HepG2 (cell line): ENCODE measurements at regions of chr6 and their contacts with region 1.

Region 1: GRCh38 chr6:137892271-137892708 is 25.2 kb downstream of the TNFAIP3 start:
- DNase-seq: no peak
- ATAC-seq: no peak
- H3K4me3 ChIP-seq: no peak overlapping the region
- H3K27ac ChIP-seq: no peak overlapping the region
- H3K4me1 ChIP-seq: peaks cover 17% of the 10 kb centered on the region
- H3K27me3 ChIP-seq: no peaks in the 10 kb centered on the region; a peak in 1 of 5 replicates
- CTCF ChIP-seq: no peak
- EP300 ChIP-seq: no peak
- POLR2A ChIP-seq: no peak
- RAD21 ChIP-seq: no peak

Region 2: DNA sequence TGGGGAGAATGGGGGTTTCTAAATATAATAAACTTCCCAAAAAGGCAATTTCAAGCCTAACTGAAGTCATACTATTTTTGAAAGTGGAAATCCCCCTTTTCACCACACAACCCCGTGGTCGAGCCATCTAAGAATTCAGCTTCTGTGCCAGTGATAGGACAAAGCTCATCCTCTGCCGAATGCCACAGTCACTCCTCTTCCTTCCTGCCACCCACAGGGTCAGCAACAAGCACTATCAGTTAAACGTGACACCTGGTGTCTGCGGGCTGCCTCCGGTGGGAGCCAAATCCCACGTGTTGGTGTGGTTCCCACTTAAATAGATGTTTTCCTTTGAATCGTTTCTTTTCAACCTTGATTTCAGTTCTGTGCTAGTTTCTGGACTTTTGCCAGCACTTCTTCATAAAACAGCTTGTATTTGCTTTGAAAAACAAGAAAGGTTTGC is 35.5 kb after region 1 on chr6:
- CTCF ChIA-PET with region 1: no interaction called
- POLR2A ChIA-PET with region 1: no interaction called
- in situ Hi-C with region 1: no loop called
- intact Hi-C with region 1: loop called (anchors 5 kb)
- DNase-seq: no peak
- ATAC-seq: no peak
- H3K4me3 ChIP-seq: no peak overlapping the region
- H3K27ac ChIP-seq: no peak overlapping the region
- H3K4me1 ChIP-seq: peaks cover 7% of the 10 kb centered on the region
- H3K27me3 ChIP-seq: peaks cover 0 to 21% of the 10 kb centered on the region in 2 experiments; a peak in 3 of 5 replicates
- CTCF ChIP-seq: no peak
- EP300 ChIP-seq: no peak
- POLR2A ChIP-seq: no peak
- RAD21 ChIP-seq: no peak